T-cell (primary cell): ENCODE measurements at regions of chr5 and their contacts with region 1.

Region 1: GRCh38 chr5:85278183-85278582 is 893.5 kb upstream of the EDIL3 start:
- DNase-seq: no peak
- ATAC-seq: no peak
- H3K4me3 ChIP-seq: no peak overlapping the region
- H3K4me3 Mint-ChIP-seq: no peak overlapping the region
- H3K27ac ChIP-seq: no peak overlapping the region
- H3K27ac Mint-ChIP-seq: no peak overlapping the region
- H3K4me1 ChIP-seq: no peaks in the 10 kb centered on the region
- H3K4me1 Mint-ChIP-seq: no peaks in the 10 kb centered on the region
- H3K27me3 ChIP-seq: no peaks in the 10 kb centered on the region
- H3K27me3 Mint-ChIP-seq: no peaks in the 10 kb centered on the region

Region 2: GRCh38 chr5:86038566-86038965 is 760.4 kb after region 1 on chr5:
- CTCF ChIA-PET with region 1: no interaction called
- POLR2A ChIA-PET with region 1: interaction called in 1 of 2 experiments, 10 read pairs
- DNase-seq: no peak
- ATAC-seq: no peak
- H3K4me3 ChIP-seq: no peak overlapping the region
- H3K4me3 Mint-ChIP-seq: no peak overlapping the region
- H3K27ac ChIP-seq: no peak overlapping the region
- H3K27ac Mint-ChIP-seq: no peak overlapping the region
- H3K4me1 ChIP-seq: no peaks in the 10 kb centered on the region
- H3K4me1 Mint-ChIP-seq: no peaks in the 10 kb centered on the region
- H3K27me3 ChIP-seq: no peaks in the 10 kb centered on the region
- H3K27me3 Mint-ChIP-seq: no peaks in the 10 kb centered on the region